ENCODE measurements at regions of chr11 and their contacts with region 1.

Region 1: GRCh38 chr11:73157053-73158010 is 15.2 kb upstream of the FCHSD2 start:
- DNase-seq: peak; percentile 77

Region 2: DNA sequence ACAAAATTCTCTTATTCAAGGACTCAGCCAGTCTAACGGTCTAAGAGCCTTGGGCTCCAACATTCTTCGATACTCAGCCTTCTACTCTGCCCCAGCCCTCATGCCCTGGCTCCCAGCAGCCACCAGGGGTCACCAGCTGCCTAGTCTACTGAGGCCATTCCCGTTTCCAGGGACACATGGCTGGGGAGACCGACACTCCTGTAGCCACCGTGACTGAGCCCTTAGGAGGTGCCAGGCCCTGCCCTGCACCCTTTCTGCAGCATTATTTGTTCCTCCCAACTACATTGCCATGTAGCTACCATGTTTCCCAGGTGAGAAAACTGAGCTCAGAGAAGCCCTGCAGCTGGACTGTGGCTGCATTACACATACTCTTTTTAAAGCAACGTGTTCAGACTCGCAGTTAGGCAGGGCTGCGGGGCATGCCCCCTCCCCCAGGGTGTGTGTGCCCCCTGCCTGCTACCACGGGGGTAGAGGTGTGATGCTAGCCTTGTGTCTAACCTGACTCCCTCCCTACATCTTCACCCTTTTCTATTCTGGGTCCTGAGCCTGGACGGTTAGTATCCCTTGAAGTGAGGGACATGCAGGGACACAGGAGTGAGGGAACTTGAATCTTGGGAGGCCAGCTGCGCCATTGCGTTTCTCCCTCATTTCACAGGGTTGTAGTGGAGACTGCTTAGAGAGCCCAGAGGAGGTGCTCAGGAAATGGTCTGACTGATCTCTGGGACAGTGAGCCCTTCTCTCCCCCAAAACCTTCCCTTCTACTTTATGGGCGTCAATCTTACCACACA is 325.6 kb before region 1 on chr11:
- in situ Hi-C with region 1: loop called (anchors 25 kb)
- DNase-seq: peak; percentile 86

Region 3: GRCh38 chr11:73439002-73439843 is 281.9 kb after region 1 on chr11:
- in situ Hi-C with region 1: no loop called
- DNase-seq: no peak

Region 4: GRCh38 chr11:73625696-73626318 is 468.5 kb after region 1 on chr11:
- in situ Hi-C with region 1: no loop called
- DNase-seq: peak; percentile 63